Heart right ventricle (tissue), 16 donors: ENCODE measurements at regions of chrX and their contacts with region 1.

Region 1: GRCh38 chrX:73855546-73855945 is 292.5 kb downstream of the CHIC1 start:
- DNase-seq: peak; percentile 13 to 47
- ATAC-seq: peak in 3 of 8 donors; percentile 53 to 70 (median 64)
- H3K4me3 ChIP-seq: no peak overlapping the region
- H3K27ac ChIP-seq: no peak overlapping the region
- H3K4me1 ChIP-seq: no peaks in the 10 kb centered on the region
- H3K27me3 ChIP-seq: peaks cover 0 to 4% (median 0%) of the 10 kb centered on the region in 7 donors
- CTCF ChIP-seq: peak; percentile 40 to 80 (median 71)

Region 2: DNA sequence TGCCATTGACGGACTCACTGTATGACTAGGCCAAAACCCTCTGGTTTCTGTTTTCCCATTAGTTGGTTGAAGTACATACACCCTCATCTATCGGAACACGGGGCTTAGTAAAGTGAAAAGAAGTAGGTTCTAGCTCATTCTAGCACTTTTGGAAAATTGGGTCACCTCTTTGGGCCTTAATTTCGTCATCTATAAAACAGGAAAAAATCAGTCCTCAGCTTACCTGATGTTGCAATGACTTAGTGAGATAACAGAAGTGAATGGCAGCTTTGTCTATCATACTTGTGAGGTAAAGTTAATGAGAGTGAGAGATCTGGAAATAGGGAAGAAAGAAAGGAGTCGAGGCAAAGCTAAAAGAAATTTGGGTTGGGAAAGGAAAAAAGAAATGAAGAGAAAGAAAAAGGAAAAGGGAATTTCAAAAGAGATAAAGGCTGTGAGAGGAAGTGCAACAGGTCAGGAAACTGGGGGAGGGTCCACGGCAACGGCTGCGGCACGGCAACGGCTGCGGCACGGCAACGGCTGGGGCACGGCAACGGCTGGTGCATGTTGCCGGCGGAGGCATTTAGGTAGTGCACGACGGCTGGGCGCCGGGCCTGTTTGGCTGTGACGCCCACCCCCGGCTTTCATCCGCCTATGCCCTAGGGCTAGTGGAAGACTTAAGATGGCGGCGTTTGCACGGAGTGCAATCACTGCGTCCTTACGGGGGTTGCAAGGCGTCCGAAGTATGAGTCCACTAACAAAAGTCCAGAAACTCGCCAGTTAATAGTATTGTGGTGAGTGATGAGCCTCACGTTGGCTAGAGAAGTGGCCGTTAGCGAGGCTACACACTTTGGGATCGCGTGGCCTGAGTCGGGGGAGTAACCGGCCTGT is 88.4 kb after region 1 on chrX:
- intact Hi-C with region 1: loop called in 2 of 10 experiments (anchors 5 to 10 kb)
- DNase-seq: peak; percentile 79 to 82
- ATAC-seq: peak; percentile 98 to 100 (median 100)
- H3K4me3 ChIP-seq: peak overlapping the region; percentile 42 to 85 (median 72)
- H3K27ac ChIP-seq: peak overlapping the region in 9 of 10 donors; percentile 59 to 94 (median 82)
- H3K4me1 ChIP-seq: peaks cover 0 to 33% (median 9%) of the 10 kb centered on the region in 9 donors
- H3K27me3 ChIP-seq: no peaks in the 10 kb centered on the region
- CTCF ChIP-seq: no peak

Region 3: GRCh38 chrX:74049141-74049540 is 193.6 kb after region 1 on chrX:
- intact Hi-C with region 1: no loop called
- DNase-seq: no peak
- ATAC-seq: no peak
- H3K4me3 ChIP-seq: no peak overlapping the region
- H3K27ac ChIP-seq: no peak overlapping the region
- H3K4me1 ChIP-seq: no peaks in the 10 kb centered on the region
- H3K27me3 ChIP-seq: peaks cover 0 to 4% (median 0%) of the 10 kb centered on the region in 7 donors
- CTCF ChIP-seq: no peak

Region 4: DNA sequence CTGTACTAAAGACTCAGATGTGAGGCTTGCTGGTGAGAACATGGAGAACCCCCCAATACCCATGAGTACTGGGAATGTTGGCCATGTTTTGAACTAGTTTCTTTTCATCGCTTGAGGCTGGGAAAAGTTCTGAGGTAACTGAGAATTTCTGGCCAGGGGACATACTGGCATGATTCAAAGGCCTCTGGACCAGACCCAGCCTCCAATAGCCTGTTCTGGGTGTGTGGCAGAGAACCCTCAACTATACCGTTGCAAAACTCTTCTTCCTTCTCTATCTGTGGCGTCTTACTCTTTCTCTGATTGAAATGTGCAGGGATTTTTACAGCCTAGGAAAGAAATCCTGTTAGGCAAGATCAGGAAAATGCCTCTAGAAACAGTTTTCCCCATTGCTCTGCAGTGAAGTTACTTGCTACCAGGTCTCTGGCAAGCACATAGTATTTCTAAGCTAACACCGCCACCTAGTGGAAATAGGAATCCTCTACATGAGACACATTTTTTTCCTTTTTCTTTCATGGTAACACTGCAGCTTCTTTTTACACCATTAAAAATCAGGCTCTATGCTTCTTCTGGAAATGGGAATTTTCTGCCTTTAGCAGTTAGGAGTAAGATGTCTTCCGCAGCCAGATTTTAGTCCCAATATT is 277.7 kb after region 1 on chrX:
- intact Hi-C with region 1: loop called in 8 of 10 experiments (anchors 2 to 10 kb)
- DNase-seq: peak in 1 of 2 donors; percentile 13
- ATAC-seq: peak in 7 of 8 donors; percentile 49 to 78 (median 70)
- H3K4me3 ChIP-seq: no peak overlapping the region
- H3K27ac ChIP-seq: no peak overlapping the region
- H3K4me1 ChIP-seq: no peaks in the 10 kb centered on the region
- H3K27me3 ChIP-seq: peaks cover 0 to 25% (median 0%) of the 10 kb centered on the region in 7 donors
- CTCF ChIP-seq: peak; percentile 39 to 85 (median 67)

Region 5: GRCh38 chrX:74343343-74344279 is 488.1 kb after region 1 on chrX:
- intact Hi-C with region 1: loop called (anchors 2 to 5 kb)
- DNase-seq: peak in 1 of 2 donors; percentile 63
- ATAC-seq: peak; percentile 38 to 99 (median 78)
- H3K4me3 ChIP-seq: no peak overlapping the region
- H3K27ac ChIP-seq: no peak overlapping the region
- H3K4me1 ChIP-seq: peaks cover 0 to 12% (median 0%) of the 10 kb centered on the region in 9 donors
- H3K27me3 ChIP-seq: peaks cover 0 to 13% (median 0%) of the 10 kb centered on the region in 7 donors
- CTCF ChIP-seq: peak; percentile 24 to 69 (median 60)

Region 6: GRCh38 chrX:74550295-74550802 is 694.8 kb after region 1 on chrX:
- intact Hi-C with region 1: loop called in 3 of 10 experiments (anchors 10 kb)
- DNase-seq: peak; percentile 77 to 84
- ATAC-seq: peak; percentile 85 to 97 (median 95)
- H3K4me3 ChIP-seq: peak overlapping the region in 2 of 10 donors; percentile 8 to 24
- H3K27ac ChIP-seq: peak overlapping the region in 3 of 10 donors; percentile 15 to 35 (median 22)
- H3K4me1 ChIP-seq: peaks cover 0 to 4% (median 0%) of the 10 kb centered on the region in 9 donors
- H3K27me3 ChIP-seq: peaks cover 0 to 15% (median 0%) of the 10 kb centered on the region in 7 donors
- CTCF ChIP-seq: peak; percentile 89 to 98 (median 95)